Lower leg skin (tissue), 4 donors: ENCODE measurements at regions of chr12 and their contacts with region 1.

Region 1: DNA sequence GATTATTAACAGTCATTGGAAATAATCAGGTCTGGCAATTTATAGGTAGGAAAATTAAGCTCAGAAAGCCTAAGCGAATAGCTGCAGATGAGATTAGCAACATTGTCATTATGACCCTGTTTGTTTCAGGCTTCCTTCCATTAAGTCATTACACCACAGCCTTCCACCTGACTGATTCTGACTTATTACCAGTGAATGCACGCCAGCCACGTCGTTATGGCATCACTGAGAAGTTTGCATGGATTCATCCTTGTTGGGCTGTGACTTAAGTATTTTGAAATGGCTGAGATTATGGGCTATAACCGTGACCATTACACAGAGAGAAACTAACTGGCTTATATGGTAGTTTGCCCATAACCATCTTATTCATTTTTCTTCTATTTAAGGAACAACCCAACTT is 18.6 kb downstream of the RASSF8 start:
- DNase-seq: no peak
- H3K4me3 ChIP-seq: no peak overlapping the region
- CTCF ChIP-seq: no peak
- POLR2A ChIP-seq: no peak

Region 2: DNA sequence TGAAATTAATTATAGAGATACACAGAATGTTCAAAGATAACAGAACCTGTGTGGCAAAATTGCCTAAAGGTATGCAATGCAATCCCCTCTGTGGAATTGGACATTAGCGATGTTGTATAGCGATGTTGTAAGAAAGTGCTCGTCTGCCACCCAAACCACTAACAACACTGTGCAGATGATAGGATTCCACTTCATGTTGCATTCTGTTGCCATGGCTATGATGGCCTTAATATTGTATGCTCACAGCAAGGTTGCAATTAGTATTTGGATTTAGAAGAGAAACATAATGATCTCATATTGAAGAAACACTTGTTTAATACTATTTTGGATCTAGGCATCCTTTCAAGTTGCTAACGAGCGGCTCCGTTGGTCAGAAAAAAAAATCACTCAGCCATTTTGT is 1288.4 kb before region 1 on chr12:
- intact Hi-C with region 1: loop called (anchors 5 kb)
- DNase-seq: no peak
- H3K4me3 ChIP-seq: no peak overlapping the region
- CTCF ChIP-seq: no peak
- POLR2A ChIP-seq: no peak